Activated CD4-positive, alpha-beta T cell treated with anti-CD3 and anti-CD28 coated beads for 36 hours (primary cell): ENCODE measurements at regions of chrX and their contacts with region 1.

Region 1: GRCh38 chrX:18377796-18378195 is 23.3 kb upstream of the SCML2 start:
- DNase-seq: peak; percentile 41
- ATAC-seq: peak; percentile 71
- H3K4me3 Mint-ChIP-seq: no peak overlapping the region
- H3K27ac Mint-ChIP-seq: no peak overlapping the region
- H3K4me1 Mint-ChIP-seq: peaks cover 4% of the 10 kb centered on the region
- H3K27me3 Mint-ChIP-seq: no peaks in the 10 kb centered on the region

Region 2: GRCh38 chrX:17788439-17788838 is 589.4 kb before region 1 on chrX:
- CTCF ChIA-PET with region 1: interaction called, 4 read pairs
- POLR2A ChIA-PET with region 1: no interaction called
- intact Hi-C with region 1: loop called in 1 of 2 experiments (anchors 1 kb)
- DNase-seq: peak; percentile 59
- ATAC-seq: peak; percentile 71
- H3K4me3 Mint-ChIP-seq: no peak overlapping the region
- H3K27ac Mint-ChIP-seq: no peak overlapping the region
- H3K4me1 Mint-ChIP-seq: peaks cover 18% of the 10 kb centered on the region
- H3K27me3 Mint-ChIP-seq: no peaks in the 10 kb centered on the region

Region 3: DNA sequence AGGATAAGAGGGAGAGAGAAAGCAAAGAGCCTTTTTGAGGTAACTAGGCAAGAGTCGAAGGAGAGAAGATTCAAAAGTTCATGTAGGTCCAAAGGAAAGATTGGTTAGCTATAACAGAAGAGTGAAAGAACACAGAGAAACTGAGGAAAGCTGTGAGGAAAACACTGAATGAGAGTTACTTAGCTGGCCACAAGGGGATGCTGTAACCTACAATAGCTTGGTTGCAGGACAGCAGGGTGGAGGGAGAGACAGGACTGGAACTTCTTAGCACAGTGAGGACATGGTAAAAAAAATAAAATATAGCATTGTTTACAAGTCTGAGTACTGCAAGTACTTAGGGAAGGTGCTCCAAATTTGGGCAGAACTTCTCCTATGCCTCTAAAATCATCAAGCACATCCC is 565.0 kb before region 1 on chrX:
- CTCF ChIA-PET with region 1: interaction called, 3 read pairs
- POLR2A ChIA-PET with region 1: no interaction called
- intact Hi-C with region 1: loop called in 1 of 2 experiments (anchors 2 kb)
- DNase-seq: no peak
- ATAC-seq: no peak
- H3K4me3 Mint-ChIP-seq: no peak overlapping the region
- H3K27ac Mint-ChIP-seq: no peak overlapping the region
- H3K4me1 Mint-ChIP-seq: no peaks in the 10 kb centered on the region
- H3K27me3 Mint-ChIP-seq: no peaks in the 10 kb centered on the region

Region 4: GRCh38 chrX:17944833-17945497 is 432.8 kb before region 1 on chrX:
- CTCF ChIA-PET with region 1: interaction called, 3 read pairs
- POLR2A ChIA-PET with region 1: no interaction called
- intact Hi-C with region 1: loop called in 1 of 2 experiments (anchors 2 kb)
- DNase-seq: peak; percentile 8
- ATAC-seq: no peak
- H3K4me3 Mint-ChIP-seq: no peak overlapping the region
- H3K27ac Mint-ChIP-seq: no peak overlapping the region
- H3K4me1 Mint-ChIP-seq: no peaks in the 10 kb centered on the region
- H3K27me3 Mint-ChIP-seq: no peaks in the 10 kb centered on the region

Region 5: GRCh38 chrX:18490806-18491555 is 113.2 kb after region 1 on chrX:
- CTCF ChIA-PET with region 1: no interaction called
- POLR2A ChIA-PET with region 1: no interaction called
- intact Hi-C with region 1: no loop called
- DNase-seq: no peak
- ATAC-seq: no peak
- H3K4me3 Mint-ChIP-seq: no peak overlapping the region
- H3K27ac Mint-ChIP-seq: no peak overlapping the region
- H3K4me1 Mint-ChIP-seq: no peaks in the 10 kb centered on the region
- H3K27me3 Mint-ChIP-seq: no peaks in the 10 kb centered on the region